OCI-LY7 (cell line): ENCODE measurements at regions of chr10 and their contacts with region 1.

Region 1: DNA sequence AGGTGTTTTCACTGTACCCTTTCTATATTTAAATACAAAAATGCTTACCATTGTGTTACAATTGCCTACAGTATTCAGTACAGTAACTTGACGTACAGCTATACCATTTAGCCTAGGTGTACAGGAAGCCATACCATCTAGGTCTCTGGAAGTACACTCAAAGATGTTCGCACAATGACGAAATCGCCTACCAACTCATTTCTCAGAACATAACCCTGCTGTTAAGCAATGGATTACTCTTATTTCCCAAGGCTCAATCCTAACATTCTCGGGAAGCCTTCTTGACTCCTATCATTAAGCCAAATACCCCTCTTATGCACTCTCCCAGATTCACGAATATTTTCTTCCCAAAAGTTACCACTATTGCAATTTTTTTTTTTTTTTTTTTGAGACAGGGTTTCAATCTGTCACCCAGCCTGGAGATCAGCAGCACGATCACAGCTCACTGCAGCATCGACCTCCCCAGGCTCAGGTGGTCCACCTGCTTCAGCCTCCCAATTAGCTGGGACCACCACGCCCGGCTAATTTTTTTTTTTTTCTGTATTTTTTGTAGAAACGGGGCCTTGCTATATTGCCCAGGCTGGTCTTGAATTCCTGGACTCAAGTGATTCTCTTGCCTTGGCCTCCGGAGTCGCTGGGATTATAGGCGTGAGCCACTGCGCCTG is 1.5 kb downstream of the CWF19L1 start:
- DNase-seq: peak; percentile 14
- H3K4me3 ChIP-seq: peak overlapping the region; percentile 96
- H3K27ac ChIP-seq: peak overlapping the region; percentile 28
- H3K4me1 ChIP-seq: peaks cover 29% of the 10 kb centered on the region
- CTCF ChIP-seq: no peak

Region 2: DNA sequence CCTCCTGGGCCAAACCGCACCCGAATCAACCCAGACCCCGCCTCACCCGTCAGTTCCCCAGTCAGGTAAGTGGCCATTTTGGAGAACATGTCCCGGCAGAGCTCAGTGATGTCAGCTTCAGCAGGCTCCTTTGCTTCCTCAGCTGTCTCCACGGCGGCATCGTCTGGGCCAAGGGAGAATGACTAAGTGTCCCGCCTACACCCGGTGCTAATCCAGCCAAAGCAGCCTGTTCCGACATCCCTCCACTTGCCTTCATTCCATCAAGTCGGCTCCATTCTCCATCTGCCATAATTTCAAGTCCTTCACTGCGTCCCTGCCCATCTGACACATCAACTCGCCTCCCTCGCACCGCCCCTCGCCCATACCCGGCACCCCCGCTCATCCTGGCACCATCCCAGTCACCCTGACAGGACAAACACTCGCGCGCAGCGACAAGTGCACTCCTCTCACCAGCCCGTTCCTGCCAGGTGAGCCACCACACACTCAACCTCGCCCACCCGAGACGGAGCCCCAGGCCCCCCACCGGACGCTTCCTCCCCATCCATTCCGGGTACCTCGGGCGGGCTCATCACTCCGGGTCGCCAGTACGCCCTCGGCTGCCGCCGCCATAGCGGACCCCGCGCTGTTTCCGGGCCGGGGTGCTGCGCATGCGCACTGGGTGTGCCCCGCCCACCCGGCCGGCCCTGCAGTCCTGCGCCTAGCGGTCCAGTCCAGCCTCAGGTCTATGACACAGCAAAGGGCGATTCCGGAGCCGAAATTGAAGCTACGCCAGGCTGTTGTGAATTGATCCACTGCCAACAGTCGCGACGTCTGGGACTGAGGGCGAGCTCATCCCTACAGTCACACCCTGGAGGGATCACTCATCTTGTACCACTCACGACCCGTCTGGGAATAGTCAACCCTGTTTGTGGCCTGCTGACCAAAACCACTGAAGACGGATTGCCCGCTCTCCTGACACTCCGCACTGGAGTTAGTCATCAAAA is 20.4 kb after region 1 on chr10 and contains the start of gene BLOC1S2:
- CTCF ChIA-PET with region 1: no interaction called
- POLR2A ChIA-PET with region 1: interaction called, 3 read pairs
- intact Hi-C with region 1: loop called (anchors 1 kb)
- DNase-seq: peak; percentile 88
- H3K4me3 ChIP-seq: peak within 1 kb of the TSS; percentile 85
- H3K27ac ChIP-seq: peak within 1 kb of the TSS; percentile 58
- H3K4me1 ChIP-seq: peaks cover 33% of the 10 kb centered on the region
- CTCF ChIP-seq: no peak; the same call in 1 of the 2 replicates
- total RNA-seq, gene BLOC1S2: 39.7 and 48.7 TPM in 2 replicates

Region 3: GRCh38 chr10:100683004-100683403 is 417.1 kb after region 1 on chr10:
- CTCF ChIA-PET with region 1: no interaction called
- POLR2A ChIA-PET with region 1: no interaction called
- intact Hi-C with region 1: no loop called
- DNase-seq: no peak
- H3K4me3 ChIP-seq: no peak overlapping the region
- H3K27ac ChIP-seq: no peak overlapping the region
- H3K4me1 ChIP-seq: no peaks in the 10 kb centered on the region
- CTCF ChIP-seq: no peak